HEK293 (cell line): ENCODE measurements at regions of chr9 and their contacts with region 1.

Region 1: DNA sequence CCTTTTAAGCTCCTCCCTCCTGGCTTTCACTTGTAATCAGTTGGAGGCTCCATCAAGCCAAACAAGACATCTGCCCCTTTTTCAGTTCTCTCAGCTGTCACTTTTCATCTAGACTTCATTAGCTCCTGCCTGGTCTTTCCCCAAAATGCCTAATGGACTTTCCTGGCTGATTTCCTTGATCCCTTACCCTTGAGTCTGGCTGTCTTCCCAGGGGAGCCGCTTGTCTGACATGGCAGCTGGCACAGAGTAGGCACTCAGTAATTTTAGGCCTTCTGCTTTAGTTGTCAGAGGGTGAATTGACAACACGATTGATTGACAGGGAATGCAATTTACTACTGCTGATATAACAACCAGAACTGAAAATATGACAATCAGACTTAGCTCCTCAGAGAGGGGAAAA is 2.1 kb downstream of the C9orf153 start:
- H3K4me3 ChIP-seq: no peak overlapping the region
- H3K27ac ChIP-seq: no peak overlapping the region
- H3K4me1 ChIP-seq: no peaks in the 10 kb centered on the region
- CTCF ChIP-seq: no peak

Region 2: GRCh38 chr9:86246752-86247161 is 10.6 kb before region 1 on chr9:
- CTCF ChIA-PET with region 1: interaction called, 10 read pairs
- POLR2A ChIA-PET with region 1: no interaction called
- H3K4me3 ChIP-seq: no peak overlapping the region
- H3K27ac ChIP-seq: no peak overlapping the region
- H3K4me1 ChIP-seq: no peaks in the 10 kb centered on the region
- CTCF ChIP-seq: no peak